ENCODE measurements at regions of chr18 and their contacts with region 1.

Region 1: DNA sequence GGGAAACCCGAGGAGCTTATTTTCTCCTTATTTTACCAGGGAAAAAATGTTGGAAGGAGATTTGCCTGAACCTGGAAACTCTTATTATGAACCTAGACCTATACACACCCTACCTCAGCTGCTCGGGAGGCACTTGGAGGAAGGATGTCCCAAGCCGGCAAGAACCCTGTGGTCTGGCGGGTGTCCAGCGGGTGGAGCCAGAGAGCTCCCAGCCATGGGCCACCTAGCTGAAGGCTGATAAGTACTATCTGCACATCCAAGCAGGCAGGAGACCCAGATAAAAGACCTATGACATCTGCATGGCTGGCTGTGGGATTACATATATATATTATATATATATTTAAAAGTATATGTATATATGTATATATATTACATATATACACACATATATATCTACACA is 1.1 kb upstream of the SLC14A1 start:
- DNase-seq: peak; percentile 62 to 73
- H3K4me3 ChIP-seq: no peak overlapping the region
- H3K27ac ChIP-seq: no peak overlapping the region
- H3K4me1 ChIP-seq: peaks cover 5% of the 10 kb centered on the region; the same call in 1 of the 2 replicates
- H3K27me3 ChIP-seq: no peaks in the 10 kb centered on the region
- CTCF ChIP-seq: peak; percentile 85

Region 2: DNA sequence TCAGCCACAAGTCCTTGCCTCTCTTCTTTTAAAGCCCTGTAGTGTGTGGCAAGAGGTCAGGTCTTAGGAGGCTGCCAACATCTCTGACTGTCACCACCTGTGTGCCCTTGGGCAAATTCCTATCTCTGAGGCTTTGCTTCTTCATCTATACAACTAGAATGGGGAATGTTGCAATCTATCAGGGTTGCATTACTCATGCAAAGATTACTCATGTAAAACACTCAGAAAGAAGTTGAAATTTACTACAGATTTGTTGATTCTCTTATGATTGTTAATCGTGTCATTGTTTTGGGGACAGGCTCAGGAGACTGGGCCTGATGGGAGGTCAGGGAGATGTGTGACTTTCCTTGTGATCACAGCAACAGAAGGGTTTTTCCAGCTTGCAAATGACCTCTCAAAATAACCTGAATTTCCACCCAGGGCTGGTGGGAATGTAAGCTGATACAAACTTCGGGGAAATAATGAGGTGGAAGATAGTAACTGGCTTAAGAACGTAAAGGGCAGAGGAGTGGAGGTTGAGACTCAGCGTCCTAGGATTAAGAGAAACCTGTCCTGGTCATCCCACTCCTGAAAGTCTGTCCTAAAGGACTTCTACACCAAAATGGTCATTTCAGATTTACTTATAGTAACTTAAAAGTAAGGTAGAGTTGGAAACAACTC is 70.5 kb after region 1 on chr18:
- CTCF ChIA-PET with region 1: no interaction called
- POLR2A ChIA-PET with region 1: no interaction called
- intact Hi-C with region 1: loop called (anchors 2 kb)
- DNase-seq: peak; percentile 78 to 100
- H3K4me3 ChIP-seq: no peak overlapping the region; the same call in 1 of the 2 replicates
- H3K27ac ChIP-seq: peak overlapping the region; percentile 97
- H3K4me1 ChIP-seq: peaks cover 49% of the 10 kb centered on the region
- H3K27me3 ChIP-seq: no peaks in the 10 kb centered on the region
- CTCF ChIP-seq: no peak

Region 3: GRCh38 chr18:45839414-45840395 is 116.8 kb after region 1 on chr18:
- CTCF ChIA-PET with region 1: interaction called, 3 read pairs
- POLR2A ChIA-PET with region 1: no interaction called
- intact Hi-C with region 1: loop called (anchors 1 kb)
- DNase-seq: peak; percentile 37 to 61
- H3K4me3 ChIP-seq: no peak overlapping the region
- H3K27ac ChIP-seq: no peak overlapping the region
- H3K4me1 ChIP-seq: peaks cover 30% of the 10 kb centered on the region
- H3K27me3 ChIP-seq: no peaks in the 10 kb centered on the region
- CTCF ChIP-seq: peak; percentile 76

Region 4: DNA sequence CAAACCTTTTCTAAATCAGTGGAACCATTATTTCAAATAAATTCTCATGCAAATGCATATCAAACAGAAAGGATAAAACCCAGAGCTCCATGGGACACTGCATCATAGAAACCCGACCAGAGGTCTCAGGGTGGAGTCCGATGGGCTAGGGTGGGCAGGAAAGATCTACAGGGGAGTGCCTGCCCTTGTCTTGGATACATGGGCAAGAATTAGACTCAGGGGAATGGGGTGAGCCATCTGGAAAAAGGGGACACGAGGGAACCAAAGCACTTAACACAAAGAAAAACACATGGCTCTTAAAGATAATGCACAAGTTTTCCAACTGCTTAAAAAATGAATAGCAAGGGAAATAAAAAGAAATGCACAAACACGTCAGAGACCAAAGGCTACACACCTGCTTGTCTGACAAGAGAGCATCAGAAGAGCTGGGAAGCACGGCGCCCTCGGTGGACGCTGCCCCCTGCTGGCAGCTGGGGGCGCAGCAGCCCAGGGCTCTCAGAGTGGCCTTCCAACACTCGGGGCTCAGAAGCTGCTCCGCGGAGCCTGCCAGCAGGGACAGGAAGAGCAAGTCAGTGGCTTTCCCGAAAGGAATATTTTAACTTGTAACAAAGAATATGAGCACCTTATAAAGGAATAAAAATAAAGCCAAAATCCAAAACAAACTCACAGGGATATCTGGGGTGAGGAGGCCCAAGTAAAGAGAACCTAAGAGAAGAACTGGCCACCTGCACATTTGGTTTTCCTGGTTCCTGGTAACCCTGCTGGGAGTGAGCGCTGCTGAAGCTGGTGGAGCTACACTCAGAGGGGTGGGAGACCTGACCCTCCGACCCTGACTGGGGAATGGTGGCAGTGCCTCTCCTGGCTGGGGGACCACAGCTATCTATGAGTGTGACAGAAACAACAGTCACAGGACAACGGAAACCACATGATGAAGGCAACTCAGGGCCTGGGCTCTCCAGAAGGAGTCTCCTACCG is 157.1 kb after region 1 on chr18:
- CTCF ChIA-PET with region 1: interaction called, 5 read pairs
- POLR2A ChIA-PET with region 1: no interaction called
- intact Hi-C with region 1: loop called (anchors 1 kb)
- DNase-seq: peak in 1 of 2 experiments; percentile 52
- H3K4me3 ChIP-seq: no peak overlapping the region
- H3K27ac ChIP-seq: no peak overlapping the region
- H3K4me1 ChIP-seq: no peaks in the 10 kb centered on the region
- H3K27me3 ChIP-seq: no peaks in the 10 kb centered on the region
- CTCF ChIP-seq: peak; percentile 98

Measured in PC-9 (cell line).